ENCODE measurements at regions of chr4 and their contacts with region 1.

Region 1: GRCh38 chr4:119041951-119042560 is 93.6 kb upstream of the MYOZ2 start:
- DNase-seq: peak in 1 of 2 donors; percentile 71
- ATAC-seq: peak; percentile 49 to 80 (median 64)
- H3K4me3 ChIP-seq: no peak overlapping the region
- H3K27ac ChIP-seq: peak overlapping the region in 8 of 10 donors; percentile 51 to 72 (median 63)
- H3K4me1 ChIP-seq: peaks cover 5 to 91% (median 75%) of the 10 kb centered on the region in 9 donors
- H3K27me3 ChIP-seq: no peaks in the 10 kb centered on the region
- CTCF ChIP-seq: peak; percentile 47 to 82 (median 66)

Region 2: DNA sequence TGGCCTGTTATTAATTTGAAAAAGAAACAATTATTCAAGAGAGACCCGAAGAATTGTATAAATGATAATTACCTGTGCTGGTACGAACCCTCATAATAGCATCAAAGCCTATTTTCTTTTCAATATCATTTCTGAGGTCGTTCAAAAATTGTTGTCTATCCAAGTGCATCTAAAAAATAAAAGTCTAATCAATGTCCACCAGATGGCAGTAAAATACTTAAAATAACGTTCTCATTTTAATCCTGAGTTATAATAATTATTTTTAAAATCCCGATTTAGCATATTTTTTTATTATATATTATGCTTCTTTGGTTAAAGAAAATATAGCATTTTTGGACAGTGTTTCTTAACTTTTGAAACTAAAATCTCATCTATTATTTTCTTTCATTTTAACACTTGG is 301.2 kb before region 1 on chr4:
- intact Hi-C with region 1: loop called in 1 of 10 experiments (anchors 10 kb)
- DNase-seq: no peak
- ATAC-seq: peak in 2 of 8 donors; percentile 36 to 57
- H3K4me3 ChIP-seq: peak overlapping the region in 5 of 10 donors; percentile 4 to 20 (median 15)
- H3K27ac ChIP-seq: peak overlapping the region in 9 of 10 donors; percentile 11 to 82 (median 64)
- H3K4me1 ChIP-seq: peaks cover 3 to 32% (median 20%) of the 10 kb centered on the region in 9 donors
- H3K27me3 ChIP-seq: no peaks in the 10 kb centered on the region
- CTCF ChIP-seq: peak; percentile 21 to 70 (median 54)

Region 3: GRCh38 chr4:118981839-118982381 is 60.1 kb before region 1 on chr4:
- intact Hi-C with region 1: loop called in 4 of 10 experiments (anchors 5 to 10 kb)
- DNase-seq: peak in 1 of 2 donors; percentile 79
- ATAC-seq: peak; percentile 54 to 89 (median 80)
- H3K4me3 ChIP-seq: peak overlapping the region in 1 of 10 donors; percentile 4
- H3K27ac ChIP-seq: peak overlapping the region in 5 of 10 donors; percentile 40 to 76 (median 64)
- H3K4me1 ChIP-seq: peaks cover 19 to 75% (median 53%) of the 10 kb centered on the region in 9 donors
- H3K27me3 ChIP-seq: no peaks in the 10 kb centered on the region
- CTCF ChIP-seq: peak; percentile 60 to 88 (median 79)

Region 4: GRCh38 chr4:119070301-119070700 is 28.2 kb after region 1 on chr4:
- intact Hi-C with region 1: no loop called
- DNase-seq: no peak
- ATAC-seq: no peak
- H3K4me3 ChIP-seq: no peak overlapping the region
- H3K27ac ChIP-seq: no peak overlapping the region
- H3K4me1 ChIP-seq: peaks cover 0 to 9% (median 0%) of the 10 kb centered on the region in 9 donors
- H3K27me3 ChIP-seq: no peaks in the 10 kb centered on the region
- CTCF ChIP-seq: no peak

Region 5: DNA sequence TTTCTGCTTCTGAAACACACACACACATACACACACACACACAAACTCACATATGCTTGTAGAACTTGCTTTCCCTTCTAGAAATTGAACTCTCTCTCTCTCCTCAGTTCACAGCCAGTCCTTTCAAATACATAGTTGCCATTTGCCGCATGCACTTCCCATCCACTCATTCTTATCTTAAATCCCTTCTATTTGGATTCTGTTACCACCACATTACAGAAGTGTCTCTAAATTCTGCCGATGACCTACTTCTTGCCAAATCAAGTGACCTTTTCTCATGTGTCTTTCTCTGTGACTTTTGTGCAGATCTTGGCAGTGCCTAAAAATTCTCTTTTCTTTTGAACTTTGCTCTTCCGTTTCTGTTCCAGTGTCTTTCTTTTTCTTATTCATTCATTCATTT is 86.1 kb after region 1 on chr4:
- intact Hi-C with region 1: loop called in 2 of 10 experiments (anchors 5 to 10 kb)
- DNase-seq: no peak
- ATAC-seq: peak; percentile 27 to 86 (median 74)
- H3K4me3 ChIP-seq: peak overlapping the region in 6 of 10 donors; percentile 10 to 45 (median 30)
- H3K27ac ChIP-seq: peak overlapping the region; percentile 5 to 93 (median 74)
- H3K4me1 ChIP-seq: peaks cover 0 to 67% (median 25%) of the 10 kb centered on the region in 9 donors
- H3K27me3 ChIP-seq: no peaks in the 10 kb centered on the region
- CTCF ChIP-seq: no peak

Region 6: GRCh38 chr4:119151161-119151560 is 109.1 kb after region 1 on chr4:
- intact Hi-C with region 1: loop called in 2 of 10 experiments (anchors 5 to 10 kb)
- DNase-seq: peak in 1 of 2 donors; percentile 46
- ATAC-seq: peak; percentile 57 to 95 (median 90)
- H3K4me3 ChIP-seq: no peak overlapping the region
- H3K27ac ChIP-seq: peak overlapping the region; percentile 2 to 81 (median 68)
- H3K4me1 ChIP-seq: peaks cover 0 to 58% (median 15%) of the 10 kb centered on the region in 9 donors
- H3K27me3 ChIP-seq: no peaks in the 10 kb centered on the region
- CTCF ChIP-seq: peak in 1 of 9 donors; percentile 13